ENCODE measurements at regions of chr7 and their contacts with region 1.

Region 1: DNA sequence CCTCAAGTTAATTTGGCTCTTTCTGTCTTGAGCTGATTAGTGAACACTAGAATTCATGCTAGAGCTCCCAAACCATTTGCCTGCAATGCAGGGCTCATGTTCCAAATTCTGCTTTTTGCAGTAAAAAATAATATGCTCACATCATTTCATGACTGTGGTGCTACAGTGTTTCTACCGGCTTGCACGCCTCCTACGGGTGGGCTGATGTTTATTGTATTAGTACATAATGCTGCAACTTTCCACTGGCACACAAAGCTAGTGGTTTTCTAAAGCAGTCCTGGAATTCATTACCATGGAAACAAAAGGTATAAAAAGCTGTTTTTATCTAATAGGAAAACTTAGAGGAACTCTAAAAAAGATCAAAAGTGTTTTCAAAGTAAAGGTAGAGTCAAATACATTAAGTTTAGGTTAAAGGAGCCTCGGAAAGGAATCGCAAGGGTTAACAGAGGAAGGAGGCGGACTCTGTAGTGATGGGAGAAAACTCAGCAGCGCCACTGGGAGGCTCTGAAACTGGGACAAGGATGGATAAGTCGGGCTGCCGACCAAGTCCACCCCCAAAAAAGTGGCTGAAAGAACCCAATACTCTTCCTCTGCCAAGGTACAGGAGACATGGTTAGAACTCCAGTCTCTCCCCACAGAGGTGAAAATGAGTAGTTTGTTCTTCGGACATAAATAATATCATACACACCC is 25.9 kb downstream of the GRM8 start:
- DNase-seq: no peak
- ATAC-seq: no peak
- H3K4me3 ChIP-seq: no peak overlapping the region
- H3K27ac ChIP-seq: no peak overlapping the region
- H3K4me1 ChIP-seq: no peaks in the 10 kb centered on the region
- H3K27me3 ChIP-seq: peaks cover 0 to 66% (median 37%) of the 10 kb centered on the region in 7 donors
- CTCF ChIP-seq: no peak

Region 2: DNA sequence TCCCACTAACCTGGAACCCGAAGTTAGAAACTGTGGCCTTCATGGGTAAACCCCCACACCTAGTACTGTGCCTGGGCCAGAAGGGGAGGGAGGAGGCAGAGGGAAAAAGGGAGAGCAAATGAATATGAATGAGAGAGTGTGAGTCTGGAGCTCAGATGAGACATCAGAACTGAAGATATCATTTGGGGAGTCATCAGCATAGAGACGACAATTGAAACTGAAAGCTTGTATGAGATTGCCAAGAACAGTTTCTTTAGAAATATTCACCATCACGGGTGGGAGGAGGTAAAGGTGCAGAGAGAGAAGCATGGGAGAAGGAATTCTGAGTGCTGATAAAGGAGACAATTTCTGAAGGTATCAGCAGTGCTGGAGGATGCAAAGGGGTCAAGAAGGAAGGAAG is 145.3 kb before region 1 on chr7:
- intact Hi-C with region 1: no loop called
- DNase-seq: no peak
- ATAC-seq: no peak
- H3K4me3 ChIP-seq: no peak overlapping the region
- H3K27ac ChIP-seq: no peak overlapping the region
- H3K4me1 ChIP-seq: no peaks in the 10 kb centered on the region
- H3K27me3 ChIP-seq: peaks cover 0 to 5% (median 0%) of the 10 kb centered on the region in 7 donors
- CTCF ChIP-seq: no peak

Region 3: DNA sequence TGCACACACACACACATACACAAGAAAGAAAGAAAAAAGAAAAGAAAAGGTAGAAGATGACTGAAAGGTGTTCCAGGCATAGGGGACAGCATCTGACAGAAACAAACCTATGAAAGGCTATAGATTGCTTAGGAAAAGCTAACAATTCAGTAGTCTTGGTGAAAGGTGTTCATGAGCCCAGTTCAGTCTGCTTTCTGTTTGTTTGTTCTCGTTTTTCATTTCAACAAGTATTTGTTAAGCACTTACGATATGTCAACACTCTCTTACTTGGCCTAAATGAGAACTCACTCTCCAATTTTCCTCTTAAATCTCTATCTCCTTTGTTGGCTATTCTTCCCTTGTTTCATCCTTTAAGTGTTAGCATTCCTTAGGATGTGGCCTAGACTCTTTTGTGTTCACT is 107.3 kb before region 1 on chr7:
- intact Hi-C with region 1: no loop called
- DNase-seq: no peak
- ATAC-seq: no peak
- H3K4me3 ChIP-seq: no peak overlapping the region
- H3K27ac ChIP-seq: no peak overlapping the region
- H3K4me1 ChIP-seq: no peaks in the 10 kb centered on the region
- H3K27me3 ChIP-seq: no peaks in the 10 kb centered on the region
- CTCF ChIP-seq: no peak

Region 4: GRCh38 chr7:127287133-127287532 is 60.3 kb after region 1 on chr7:
- intact Hi-C with region 1: loop called in 1 of 10 experiments (anchors 10 kb)
- DNase-seq: no peak
- ATAC-seq: no peak
- H3K4me3 ChIP-seq: no peak overlapping the region
- H3K27ac ChIP-seq: no peak overlapping the region
- H3K4me1 ChIP-seq: no peaks in the 10 kb centered on the region
- H3K27me3 ChIP-seq: peaks cover 0 to 5% (median 0%) of the 10 kb centered on the region in 7 donors
- CTCF ChIP-seq: no peak